ENCODE measurements at regions of chr7 and their contacts with region 1.

Region 1: DNA sequence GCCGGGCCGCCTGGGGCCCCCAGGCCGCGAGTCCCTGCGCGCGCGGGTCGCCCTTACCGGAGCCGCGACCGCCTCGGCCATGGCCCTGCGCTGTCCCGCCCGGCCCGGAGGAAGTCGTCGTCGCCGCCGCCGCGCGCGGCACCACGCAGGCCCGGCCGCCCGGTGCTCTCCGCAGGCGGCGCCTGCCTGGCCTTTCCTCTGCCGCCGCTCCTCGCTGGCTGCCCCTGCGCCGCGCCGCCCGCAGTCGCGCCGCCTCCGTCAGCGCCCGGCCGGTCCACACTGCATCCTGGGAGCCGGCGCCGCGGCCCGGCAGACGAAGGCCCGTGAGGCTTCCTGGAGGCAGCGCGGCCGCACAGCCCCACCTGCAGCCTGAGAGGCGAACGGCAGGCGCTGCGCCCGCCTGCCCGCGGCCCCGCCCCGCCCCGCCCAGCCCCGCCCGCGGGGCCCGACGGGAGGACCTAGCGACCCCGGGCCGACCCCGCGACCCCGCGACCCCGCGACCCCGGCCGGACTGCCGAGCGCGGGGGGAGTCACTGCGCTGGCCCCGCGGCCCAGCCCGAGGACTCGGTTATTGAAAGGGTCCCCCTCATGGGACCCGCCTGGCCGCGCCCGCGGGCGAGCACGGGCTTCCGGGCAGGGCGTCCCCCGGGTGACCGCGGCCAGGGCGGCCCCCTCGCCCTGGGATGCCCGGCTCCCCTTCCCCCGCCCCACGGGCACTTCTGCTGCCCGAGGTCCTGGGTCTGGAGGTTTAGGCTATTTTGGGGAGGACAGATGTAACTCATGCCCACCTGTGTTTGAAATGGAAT is at the start of gene ZNF746:
- DNase-seq: peak; percentile 84 to 86
- ATAC-seq: peak; percentile 87 to 91
- H3K4me3 ChIP-seq: peak within 1 kb of the TSS; percentile 100
- H3K27ac ChIP-seq: peak within 1 kb of the TSS; percentile 99 to 100
- H3K4me1 ChIP-seq: peaks cover 19% of the 10 kb centered on the region
- CTCF ChIP-seq: peak; percentile 78
- EP300 ChIP-seq: no peak
- POLR2A ChIP-seq: peak; percentile 58
- RAD21 ChIP-seq: peak; percentile 55 to 71
- polyA plus RNA-seq, gene ZNF746: 6.8 and 7.2 TPM in 2 replicates

Region 2: GRCh38 chr7:149422129-149422913 is 75.3 kb before region 1 on chr7:
- CTCF ChIA-PET with region 1: interaction called, 11 read pairs
- POLR2A ChIA-PET with region 1: no interaction called
- DNase-seq: peak; percentile 85 to 86
- ATAC-seq: peak; percentile 95 to 97
- H3K4me3 ChIP-seq: peak overlapping the region; percentile 49
- H3K27ac ChIP-seq: peak overlapping the region; percentile 78 to 93
- H3K4me1 ChIP-seq: no peaks in the 10 kb centered on the region
- CTCF ChIP-seq: peak; percentile 100
- EP300 ChIP-seq: no peak
- POLR2A ChIP-seq: peak; percentile 48
- RAD21 ChIP-seq: peak; percentile 37 to 72

Region 3: DNA sequence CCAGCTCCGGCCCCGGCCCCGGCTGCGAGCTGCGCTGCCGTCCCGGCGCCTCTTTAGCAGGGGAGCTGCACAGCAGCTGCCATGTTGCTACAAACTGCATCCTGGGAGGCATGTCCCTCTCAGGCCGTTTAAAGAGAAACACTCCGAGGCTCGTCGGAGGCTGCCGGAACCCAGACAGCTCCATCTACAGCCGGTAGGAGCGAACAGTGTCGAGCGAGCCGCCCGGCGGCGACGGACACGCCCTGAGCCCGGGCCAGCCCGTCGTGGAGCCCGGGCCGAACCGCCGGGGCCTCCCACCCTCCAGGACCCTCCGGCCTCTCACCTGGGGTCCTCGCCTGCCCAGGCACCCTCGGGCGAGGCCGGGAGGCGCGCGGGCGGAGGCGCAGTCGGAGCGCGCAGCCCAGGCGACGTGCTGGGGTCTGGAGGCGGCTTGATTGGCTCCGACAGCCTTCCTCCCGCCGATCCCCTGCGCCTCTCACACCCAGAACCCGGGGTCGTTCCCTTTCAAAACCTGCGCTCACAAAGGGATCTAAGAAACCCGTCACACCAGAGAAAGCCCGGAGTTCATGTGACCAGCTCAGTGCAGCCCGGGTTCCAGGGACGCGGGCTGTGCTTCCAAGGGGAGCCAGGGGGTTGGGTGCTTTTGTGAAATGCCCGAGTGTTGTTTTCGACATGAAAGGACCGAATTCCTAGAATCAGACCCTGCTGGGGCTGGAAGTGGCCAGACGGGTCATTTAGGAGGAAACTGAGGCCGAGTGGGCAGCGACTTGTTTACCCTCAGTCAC is 37.0 kb before region 1 on chr7 and contains the start of gene ZNF777:
- CTCF ChIA-PET with region 1: interaction called, 3 read pairs
- POLR2A ChIA-PET with region 1: interaction called, 10 read pairs
- DNase-seq: peak; percentile 91 to 96
- ATAC-seq: peak; percentile 96 to 99
- H3K4me3 ChIP-seq: peak within 1 kb of the TSS; percentile 64
- H3K27ac ChIP-seq: peak within 1 kb of the TSS; percentile 88 to 99
- H3K4me1 ChIP-seq: peaks cover 12% of the 10 kb centered on the region
- CTCF ChIP-seq: peak; percentile 69
- EP300 ChIP-seq: no peak
- POLR2A ChIP-seq: peak; percentile 69
- RAD21 ChIP-seq: no peak
- polyA plus RNA-seq, gene ZNF777: 4.9 and 5.4 TPM in 2 replicates

Measured in A549 (cell line).